ENCODE measurements at regions of chr2 and their contacts with region 1.

Region 1: GRCh38 chr2:112726497-112727190 is 5.8 kb downstream of the NT5DC4 start:
- DNase-seq: peak; percentile 81 to 84 (median 84)
- H3K4me3 ChIP-seq: no peak overlapping the region
- H3K4me3 Mint-ChIP-seq: no peak overlapping the region
- H3K27ac ChIP-seq: no peak overlapping the region
- H3K27ac Mint-ChIP-seq: no peak overlapping the region
- H3K4me1 ChIP-seq: no peaks in the 10 kb centered on the region
- H3K4me1 Mint-ChIP-seq: peaks cover 0 to 6% (median 1%) of the 10 kb centered on the region in 4 donors
- H3K27me3 ChIP-seq: no peaks in the 10 kb centered on the region
- H3K27me3 Mint-ChIP-seq: no peaks in the 10 kb centered on the region

Region 2: DNA sequence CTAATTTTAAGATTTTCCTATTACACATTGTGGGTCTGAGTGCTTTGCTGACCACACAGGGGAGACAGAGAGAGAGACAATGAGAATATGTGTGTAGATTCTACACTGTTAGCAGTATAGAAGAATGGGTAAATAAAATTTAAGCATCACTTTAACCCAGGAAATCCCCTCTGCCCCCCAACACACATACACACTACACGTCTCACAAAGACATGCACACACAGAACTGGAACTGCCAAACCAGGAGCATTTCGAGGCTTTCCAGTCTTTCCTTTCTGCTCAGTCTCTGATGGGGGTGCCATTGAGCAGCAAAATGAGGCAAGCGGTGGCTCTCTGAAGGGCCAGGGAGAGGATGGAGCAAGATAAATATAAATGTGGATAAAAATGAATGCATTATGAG is 825.8 kb before region 1 on chr2:
- CTCF ChIA-PET with region 1: no interaction called
- POLR2A ChIA-PET with region 1: no interaction called
- intact Hi-C with region 1: no loop called
- DNase-seq: no peak
- H3K4me3 ChIP-seq: no peak overlapping the region
- H3K4me3 Mint-ChIP-seq: peak overlapping the region in 2 of 8 donors; percentile 11 to 40
- H3K27ac ChIP-seq: no peak overlapping the region
- H3K27ac Mint-ChIP-seq: no peak overlapping the region
- H3K4me1 ChIP-seq: peaks cover 13% of the 10 kb centered on the region
- H3K4me1 Mint-ChIP-seq: peaks cover 4 to 11% (median 7%) of the 10 kb centered on the region in 4 donors
- H3K27me3 ChIP-seq: no peaks in the 10 kb centered on the region
- H3K27me3 Mint-ChIP-seq: peaks cover 4 to 11% of the 10 kb centered on the region in 2 donors

Region 3: DNA sequence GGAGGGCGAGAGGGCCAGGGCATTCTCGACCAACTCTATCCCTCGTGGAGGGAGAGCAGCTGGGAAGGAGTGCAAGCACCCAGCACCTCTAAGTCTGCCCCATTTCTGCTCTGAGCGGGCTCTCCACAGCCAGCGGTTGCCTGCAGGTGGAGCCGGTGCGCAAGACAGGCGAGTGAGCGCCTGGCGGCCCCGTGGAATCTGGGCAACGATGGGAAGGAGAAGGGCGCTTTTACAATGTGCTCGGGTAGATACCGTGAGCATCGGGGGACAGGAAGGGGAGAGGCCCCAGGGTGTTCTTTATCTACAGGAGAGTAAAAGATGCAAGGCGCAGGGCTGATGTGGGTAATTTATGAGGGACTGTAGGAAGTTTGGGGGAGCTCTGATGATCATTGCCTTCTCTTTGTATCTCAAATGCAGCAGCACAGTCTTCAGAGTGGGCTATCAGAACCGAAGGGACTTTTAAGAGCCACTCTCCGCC is 245.6 kb before region 1 on chr2:
- CTCF ChIA-PET with region 1: no interaction called
- POLR2A ChIA-PET with region 1: no interaction called
- intact Hi-C with region 1: loop called (anchors 10 kb)
- DNase-seq: peak; percentile 77 to 86 (median 82)
- H3K4me3 ChIP-seq: peak overlapping the region; percentile 63 to 78
- H3K4me3 Mint-ChIP-seq: peak overlapping the region; percentile 89 to 99 (median 96)
- H3K27ac ChIP-seq: peak overlapping the region; percentile 62
- H3K27ac Mint-ChIP-seq: peak overlapping the region; percentile 84 to 97 (median 95)
- H3K4me1 ChIP-seq: peaks cover 26% of the 10 kb centered on the region
- H3K4me1 Mint-ChIP-seq: peaks cover 17 to 39% (median 25%) of the 10 kb centered on the region in 4 donors
- H3K27me3 ChIP-seq: no peaks in the 10 kb centered on the region
- H3K27me3 Mint-ChIP-seq: no peaks in the 10 kb centered on the region

Region 4: GRCh38 chr2:112601751-112602150 is 124.9 kb before region 1 on chr2:
- CTCF ChIA-PET with region 1: interaction called, 245 read pairs
- POLR2A ChIA-PET with region 1: interaction called, 13 read pairs
- intact Hi-C with region 1: loop called (anchors 1 kb)
- DNase-seq: no peak
- H3K4me3 ChIP-seq: no peak overlapping the region
- H3K4me3 Mint-ChIP-seq: no peak overlapping the region
- H3K27ac ChIP-seq: no peak overlapping the region
- H3K27ac Mint-ChIP-seq: peak overlapping the region in 1 of 7 donors; percentile 77
- H3K4me1 ChIP-seq: peaks cover 6% of the 10 kb centered on the region
- H3K4me1 Mint-ChIP-seq: peaks cover 4 to 5% (median 4%) of the 10 kb centered on the region in 4 donors
- H3K27me3 ChIP-seq: no peaks in the 10 kb centered on the region
- H3K27me3 Mint-ChIP-seq: no peaks in the 10 kb centered on the region

Region 5: GRCh38 chr2:112658820-112659667 is 67.6 kb before region 1 on chr2:
- CTCF ChIA-PET with region 1: interaction called, 11 read pairs
- POLR2A ChIA-PET with region 1: no interaction called
- intact Hi-C with region 1: no loop called
- DNase-seq: no peak
- H3K4me3 ChIP-seq: no peak overlapping the region
- H3K4me3 Mint-ChIP-seq: peak overlapping the region in 1 of 8 donors; percentile 52
- H3K27ac ChIP-seq: no peak overlapping the region
- H3K27ac Mint-ChIP-seq: peak overlapping the region; percentile 61 to 84 (median 72)
- H3K4me1 ChIP-seq: peaks cover 32% of the 10 kb centered on the region
- H3K4me1 Mint-ChIP-seq: peaks cover 28 to 66% (median 37%) of the 10 kb centered on the region in 4 donors
- H3K27me3 ChIP-seq: no peaks in the 10 kb centered on the region
- H3K27me3 Mint-ChIP-seq: no peaks in the 10 kb centered on the region

Region 6: GRCh38 chr2:112699984-112700667 is 26.5 kb before region 1 on chr2:
- CTCF ChIA-PET with region 1: interaction called, 16 read pairs
- POLR2A ChIA-PET with region 1: interaction called, 3 read pairs
- intact Hi-C with region 1: no loop called
- DNase-seq: no peak
- H3K4me3 ChIP-seq: no peak overlapping the region
- H3K4me3 Mint-ChIP-seq: no peak overlapping the region
- H3K27ac ChIP-seq: no peak overlapping the region
- H3K27ac Mint-ChIP-seq: no peak overlapping the region
- H3K4me1 ChIP-seq: peaks cover under 1% of the 10 kb centered on the region
- H3K4me1 Mint-ChIP-seq: peaks cover 0 to 3% (median 2%) of the 10 kb centered on the region in 4 donors
- H3K27me3 ChIP-seq: no peaks in the 10 kb centered on the region
- H3K27me3 Mint-ChIP-seq: peaks cover 0 to 2% of the 10 kb centered on the region in 2 donors

Region 7: DNA sequence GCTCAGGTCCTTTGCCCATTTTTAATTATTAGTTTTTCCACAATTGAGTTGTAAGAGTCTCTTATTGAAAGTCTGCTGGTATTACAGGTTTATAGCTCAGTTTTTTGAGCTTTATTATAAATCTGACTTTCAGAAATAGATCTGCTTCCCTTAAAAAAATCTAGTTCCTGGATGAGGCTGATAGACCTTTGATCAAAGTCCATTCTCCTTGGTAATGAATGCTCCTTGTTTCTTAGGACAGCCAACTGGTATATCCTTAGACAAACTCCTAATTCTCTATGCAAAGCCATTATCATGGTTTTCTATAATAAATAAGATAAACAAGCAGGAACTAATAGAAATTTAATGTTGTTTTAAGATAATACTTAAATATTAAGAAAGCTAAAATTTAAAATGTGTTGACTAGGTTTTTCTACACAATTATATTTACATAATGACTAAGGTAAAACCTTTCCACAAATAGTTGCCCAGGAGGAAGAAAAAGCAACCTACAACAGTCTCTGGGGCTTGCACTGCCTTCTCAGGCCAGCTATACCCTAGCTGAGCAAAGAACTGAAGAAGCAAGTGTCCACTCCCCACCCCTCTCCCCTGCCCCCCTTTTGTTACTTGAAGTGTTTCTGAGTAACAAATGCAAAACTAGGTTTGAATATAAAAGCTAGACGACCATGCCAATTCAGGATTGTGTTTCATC is 11.0 kb after region 1 on chr2:
- CTCF ChIA-PET with region 1: interaction called, 28 read pairs
- POLR2A ChIA-PET with region 1: no interaction called
- intact Hi-C with region 1: no loop called
- DNase-seq: no peak
- H3K4me3 ChIP-seq: no peak overlapping the region
- H3K4me3 Mint-ChIP-seq: no peak overlapping the region
- H3K27ac ChIP-seq: no peak overlapping the region
- H3K27ac Mint-ChIP-seq: no peak overlapping the region
- H3K4me1 ChIP-seq: no peaks in the 10 kb centered on the region
- H3K4me1 Mint-ChIP-seq: no peaks in the 10 kb centered on the region
- H3K27me3 ChIP-seq: no peaks in the 10 kb centered on the region
- H3K27me3 Mint-ChIP-seq: peaks cover 0 to 2% of the 10 kb centered on the region in 2 donors

Region 8: GRCh38 chr2:112884869-112885505 is 158.3 kb after region 1 on chr2:
- CTCF ChIA-PET with region 1: interaction called, 11 read pairs
- POLR2A ChIA-PET with region 1: no interaction called
- intact Hi-C with region 1: no loop called
- DNase-seq: peak; percentile 55 to 65 (median 60)
- H3K4me3 ChIP-seq: no peak overlapping the region
- H3K4me3 Mint-ChIP-seq: peak overlapping the region in 2 of 8 donors; percentile 7 to 12
- H3K27ac ChIP-seq: no peak overlapping the region
- H3K27ac Mint-ChIP-seq: peak overlapping the region in 3 of 7 donors; percentile 6 to 23 (median 20)
- H3K4me1 ChIP-seq: no peaks in the 10 kb centered on the region
- H3K4me1 Mint-ChIP-seq: peaks cover 3 to 11% (median 8%) of the 10 kb centered on the region in 4 donors
- H3K27me3 ChIP-seq: no peaks in the 10 kb centered on the region
- H3K27me3 Mint-ChIP-seq: no peaks in the 10 kb centered on the region